ENCODE measurements at regions of chr13 and their contacts with region 1.

Region 1: GRCh38 chr13:112873851-112874750 is 94.9 kb upstream of the MCF2L start:
- DNase-seq: peak; percentile 44
- H3K4me3 Mint-ChIP-seq: no peak overlapping the region
- H3K27ac Mint-ChIP-seq: peak overlapping the region; percentile 79
- H3K4me1 Mint-ChIP-seq: peaks cover 14% of the 10 kb centered on the region
- H3K27me3 Mint-ChIP-seq: no peaks in the 10 kb centered on the region

Region 2: DNA sequence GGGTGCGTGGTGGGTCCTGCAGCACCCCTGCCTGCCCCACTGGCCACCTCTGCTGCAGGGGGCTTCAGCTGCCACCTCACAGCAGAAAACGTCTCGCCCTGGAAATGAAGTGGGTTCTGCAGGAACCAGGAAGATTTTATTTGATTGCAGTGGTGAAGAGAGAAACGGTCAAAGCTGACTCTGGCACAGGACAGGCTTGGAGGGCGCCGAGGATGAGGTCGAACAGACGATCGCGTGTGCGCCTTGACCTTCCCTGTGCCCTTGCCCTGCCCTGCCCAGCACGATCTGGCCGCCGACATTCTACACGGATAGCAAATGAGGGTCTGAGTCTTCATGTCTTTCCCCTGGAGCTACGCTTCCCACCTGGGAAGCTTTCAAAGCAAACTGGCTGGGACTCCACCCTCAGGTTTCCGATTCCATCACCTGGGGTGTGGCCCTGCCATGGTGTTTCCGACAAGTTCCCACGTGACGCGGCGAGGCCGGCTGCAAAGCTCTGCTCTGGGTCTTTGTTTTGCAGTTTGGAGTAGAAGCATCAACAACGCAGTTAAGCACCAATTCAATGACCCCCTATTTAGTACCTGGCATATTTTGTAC is 235.8 kb before region 1 on chr13:
- intact Hi-C with region 1: loop called (anchors 1 kb)
- DNase-seq: no peak
- H3K4me3 Mint-ChIP-seq: no peak overlapping the region
- H3K27ac Mint-ChIP-seq: no peak overlapping the region
- H3K4me1 Mint-ChIP-seq: peaks cover 9% of the 10 kb centered on the region
- H3K27me3 Mint-ChIP-seq: peaks cover 15% of the 10 kb centered on the region